ENCODE measurements at regions of chr14 and their contacts with region 1.

Region 1: GRCh38 chr14:64698903-64699302 is 5.3 kb upstream of the PLEKHG3 start:
- DNase-seq: peak; percentile 55
- H3K4me3 Mint-ChIP-seq: no peak overlapping the region
- H3K27ac Mint-ChIP-seq: peak overlapping the region; percentile 80
- H3K4me1 Mint-ChIP-seq: peaks cover 84% of the 10 kb centered on the region
- H3K27me3 Mint-ChIP-seq: peaks cover 13% of the 10 kb centered on the region

Region 2: DNA sequence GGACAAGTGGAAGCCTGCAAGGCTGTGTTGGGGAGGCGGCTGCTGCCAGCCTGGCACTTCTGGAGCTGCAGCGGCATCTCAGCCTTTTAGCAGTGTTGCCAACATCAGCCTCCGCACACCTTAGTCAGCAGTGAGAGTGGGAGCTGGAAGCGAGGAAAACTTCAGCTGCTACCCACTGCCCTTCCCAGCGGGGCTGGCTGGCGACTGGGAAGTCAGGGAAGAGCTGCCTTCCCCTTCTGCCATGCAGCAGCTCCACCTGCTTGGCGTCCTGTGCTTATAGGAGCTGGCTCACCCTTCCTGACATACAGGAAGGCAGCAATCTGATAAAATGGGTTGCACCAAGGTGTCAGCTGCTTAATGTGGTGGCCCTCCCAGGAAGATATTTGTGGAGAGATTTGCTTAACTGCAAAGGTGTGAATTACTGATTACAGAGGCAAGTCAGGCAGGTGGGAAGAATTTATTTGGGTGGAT is 10.1 kb before region 1 on chr14:
- CTCF ChIA-PET with region 1: interaction called, 15 read pairs
- POLR2A ChIA-PET with region 1: interaction called, 120 read pairs
- DNase-seq: no peak
- H3K4me3 Mint-ChIP-seq: no peak overlapping the region
- H3K27ac Mint-ChIP-seq: peak overlapping the region; percentile 18
- H3K4me1 Mint-ChIP-seq: peaks cover 50% of the 10 kb centered on the region
- H3K27me3 Mint-ChIP-seq: no peaks in the 10 kb centered on the region

Region 3: GRCh38 chr14:64720131-64720576 is 21.3 kb after region 1 on chr14:
- CTCF ChIA-PET with region 1: interaction called, 12 read pairs
- POLR2A ChIA-PET with region 1: interaction called, 230 read pairs
- DNase-seq: no peak
- H3K4me3 Mint-ChIP-seq: no peak overlapping the region
- H3K27ac Mint-ChIP-seq: peak overlapping the region; percentile 96
- H3K4me1 Mint-ChIP-seq: peaks cover 98% of the 10 kb centered on the region
- H3K27me3 Mint-ChIP-seq: no peaks in the 10 kb centered on the region

Region 4: DNA sequence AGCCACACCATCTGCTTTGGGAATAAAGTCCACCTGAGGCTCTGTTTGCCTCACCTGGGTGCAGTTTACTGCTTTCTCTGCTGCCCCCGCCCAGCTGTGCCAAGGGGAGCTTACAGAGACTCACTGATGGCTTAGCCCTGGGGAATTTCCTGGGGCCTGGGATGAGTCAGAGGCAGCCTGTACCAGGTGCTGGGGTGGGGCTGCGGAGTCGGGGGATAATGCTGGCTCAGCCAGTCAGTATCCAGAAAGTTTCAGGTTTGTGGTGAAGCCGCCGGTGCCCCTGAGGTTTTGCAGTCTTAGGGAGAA is 27.6 kb after region 1 on chr14:
- CTCF ChIA-PET with region 1: interaction called, 12 read pairs
- POLR2A ChIA-PET with region 1: interaction called, 230 read pairs
- DNase-seq: peak; percentile 59
- H3K4me3 Mint-ChIP-seq: no peak overlapping the region
- H3K27ac Mint-ChIP-seq: peak overlapping the region; percentile 96
- H3K4me1 Mint-ChIP-seq: peaks cover 94% of the 10 kb centered on the region
- H3K27me3 Mint-ChIP-seq: no peaks in the 10 kb centered on the region

Region 5: DNA sequence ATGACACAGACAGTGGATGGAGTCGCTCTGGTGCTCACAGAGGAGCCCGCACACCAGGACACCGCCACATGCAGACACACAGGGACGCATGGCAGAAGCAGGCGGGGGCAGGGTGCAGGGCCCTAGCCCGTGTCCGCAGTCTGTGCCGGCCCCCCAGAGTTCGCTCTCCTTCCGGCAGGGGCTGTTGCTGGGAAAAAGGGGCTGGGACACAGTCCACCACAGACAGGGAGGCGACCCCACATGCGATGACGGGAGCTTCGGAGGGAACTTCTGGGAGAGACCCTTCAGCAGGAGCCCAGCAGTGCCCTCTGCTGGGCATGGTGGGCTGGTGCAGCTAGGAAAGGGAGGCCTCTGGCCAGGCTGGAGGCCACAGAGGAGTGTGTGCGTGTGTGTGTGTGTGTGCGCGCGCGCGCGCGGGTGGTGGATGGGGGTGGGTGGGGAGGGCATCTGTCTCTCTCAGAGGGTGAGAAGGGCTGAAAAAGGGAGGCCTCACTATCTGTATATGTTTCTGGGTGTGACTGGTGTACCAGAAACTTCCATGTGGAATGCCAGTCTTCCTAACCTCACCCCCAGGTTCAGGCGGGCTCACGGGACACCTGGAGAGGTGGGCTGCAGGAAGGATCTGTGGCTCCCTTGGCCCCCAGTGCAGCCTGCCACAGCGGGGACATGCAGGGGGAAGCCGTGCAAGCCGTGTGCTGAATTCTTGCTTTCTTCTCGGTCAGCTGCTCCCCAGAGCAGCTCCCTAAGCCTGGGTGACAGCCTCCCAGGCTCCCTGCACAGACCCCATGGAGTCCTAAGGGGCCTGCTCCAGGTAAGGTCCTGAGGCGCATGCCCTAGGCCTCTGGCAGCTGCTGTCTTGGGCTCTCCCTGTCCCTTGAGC is 66.0 kb after region 1 on chr14:
- CTCF ChIA-PET with region 1: interaction called, 5 read pairs
- POLR2A ChIA-PET with region 1: interaction called, 16 read pairs
- DNase-seq: peak; percentile 75
- H3K4me3 Mint-ChIP-seq: no peak overlapping the region
- H3K27ac Mint-ChIP-seq: no peak overlapping the region
- H3K4me1 Mint-ChIP-seq: peaks cover 65% of the 10 kb centered on the region
- H3K27me3 Mint-ChIP-seq: peaks cover 8% of the 10 kb centered on the region

Region 6: GRCh38 chr14:64828071-64828470 is 129.2 kb after region 1 on chr14:
- CTCF ChIA-PET with region 1: no interaction called
- POLR2A ChIA-PET with region 1: no interaction called
- DNase-seq: no peak
- H3K4me3 Mint-ChIP-seq: no peak overlapping the region
- H3K27ac Mint-ChIP-seq: no peak overlapping the region
- H3K4me1 Mint-ChIP-seq: peaks cover 3% of the 10 kb centered on the region
- H3K27me3 Mint-ChIP-seq: peaks cover 22% of the 10 kb centered on the region

Measured in activated CD4-positive, alpha-beta memory T cell treated with anti-CD3 and anti-CD28 coated beads, Interleukin-2, amount 10 ng/mL, durations not matched to agents 7 days and 5 days (primary cell).